ENCODE measurements at regions of chr5 and their contacts with region 1.

Region 1: GRCh38 chr5:103178167-103178566 is 58.1 kb downstream of the PPIP5K2 start:
- DNase-seq: no peak
- ATAC-seq: no peak
- H3K4me3 ChIP-seq: no peak overlapping the region
- H3K4me1 ChIP-seq: no peaks in the 10 kb centered on the region
- CTCF ChIP-seq: no peak

Region 2: DNA sequence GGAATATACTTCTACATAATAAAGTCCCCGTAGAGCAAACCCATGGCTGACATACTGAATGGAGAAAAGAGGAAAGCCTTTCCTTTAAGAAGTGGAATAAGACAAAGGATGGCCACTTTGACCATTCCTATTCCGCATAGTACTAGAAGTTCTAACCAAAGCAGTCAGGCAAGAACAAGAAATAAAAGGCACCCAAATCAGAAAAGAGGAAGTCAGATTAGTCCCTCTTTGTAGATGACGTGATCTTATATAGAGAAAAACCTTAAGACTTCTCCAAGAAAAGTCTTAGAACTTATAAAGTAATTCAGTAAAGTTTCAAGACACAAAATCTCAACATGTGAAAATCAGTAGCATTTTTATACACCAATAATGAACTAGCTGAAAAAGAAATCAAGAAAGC is 192.1 kb before region 1 on chr5:
- intact Hi-C with region 1: no loop called
- DNase-seq: no peak
- ATAC-seq: no peak
- H3K4me3 ChIP-seq: no peak overlapping the region
- H3K4me1 ChIP-seq: no peaks in the 10 kb centered on the region
- CTCF ChIP-seq: no peak

Region 3: DNA sequence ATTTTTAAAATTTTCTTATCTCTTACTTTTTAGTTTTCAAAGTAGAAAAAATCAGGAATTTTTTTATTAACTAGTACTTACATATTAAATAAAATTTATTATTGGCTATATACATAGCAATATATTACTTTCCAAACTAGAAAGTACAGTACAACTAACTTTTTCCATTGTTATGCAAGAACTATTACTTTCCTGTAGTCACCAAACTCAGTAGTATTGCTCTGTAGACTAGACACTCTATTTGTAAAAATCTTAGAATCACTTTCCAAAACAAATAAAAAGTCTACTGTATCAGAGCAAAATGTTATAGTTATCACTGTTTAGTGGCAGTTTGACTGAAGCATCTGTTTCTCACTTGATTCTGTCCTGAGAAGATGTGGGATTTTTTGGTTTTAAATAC is 25.1 kb after region 1 on chr5:
- intact Hi-C with region 1: loop called in 1 of 2 experiments (anchors 2 kb)
- DNase-seq: no peak
- ATAC-seq: no peak
- H3K4me3 ChIP-seq: no peak overlapping the region
- H3K4me1 ChIP-seq: no peaks in the 10 kb centered on the region
- CTCF ChIP-seq: no peak